ENCODE measurements at regions of chr19 and their contacts with region 1.

Region 1: GRCh38 chr19:9785367-9786331 is 17.1 kb upstream of the ZNF846 start:
- DNase-seq: peak; percentile 99
- H3K4me3 ChIP-seq: peak overlapping the region; percentile 99
- H3K27ac ChIP-seq: peak overlapping the region; percentile 91
- H3K4me1 ChIP-seq: peaks cover 7% of the 10 kb centered on the region; the same call in 1 of the 2 replicates
- H3K27me3 ChIP-seq: no peaks in the 10 kb centered on the region

Region 2: GRCh38 chr19:9139609-9140158 is 646.0 kb before region 1 on chr19:
- in situ Hi-C with region 1: loop called (anchors 10 kb)
- DNase-seq: peak; percentile 13
- H3K4me3 ChIP-seq: peak overlapping the region; percentile 100
- H3K27ac ChIP-seq: no peak overlapping the region
- H3K4me1 ChIP-seq: peaks cover 8% of the 10 kb centered on the region
- H3K27me3 ChIP-seq: no peaks in the 10 kb centered on the region

Region 3: DNA sequence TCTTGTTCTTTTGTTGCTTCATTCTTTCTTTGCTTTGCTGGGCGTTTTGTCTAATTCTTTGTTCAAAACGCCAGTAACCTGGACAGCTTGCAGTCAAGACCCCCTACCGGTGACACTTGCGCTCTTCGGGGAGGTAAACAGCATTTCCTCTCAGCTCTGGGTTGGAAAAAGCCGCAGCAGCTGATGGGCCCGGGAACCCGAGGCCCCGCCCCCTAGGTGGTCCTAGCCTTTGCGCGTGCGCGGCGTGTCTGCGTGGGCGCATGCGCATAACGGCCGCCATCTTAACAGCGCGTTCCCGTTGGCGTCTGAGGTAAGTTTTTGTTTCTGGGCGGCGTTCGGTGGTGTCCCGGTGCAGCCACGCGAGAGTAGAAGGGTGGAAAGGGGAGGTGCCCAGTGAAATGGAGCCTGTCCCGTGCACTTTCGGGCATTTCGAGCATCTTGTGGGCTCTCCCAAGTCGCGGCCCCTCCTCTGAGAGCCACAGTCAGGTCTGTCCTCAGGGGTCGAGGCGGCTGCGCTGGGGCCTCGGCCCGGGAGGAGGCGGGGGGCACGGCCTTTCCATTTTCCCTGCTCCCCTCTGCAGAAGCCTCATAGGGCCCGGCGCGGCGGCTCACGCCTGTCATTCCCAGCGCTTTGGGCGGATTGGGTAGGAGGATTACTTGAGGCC is 461.6 kb before region 1 on chr19 and contains the start of gene ZNF559:
- in situ Hi-C with region 1: loop called (anchors 25 kb)
- DNase-seq: peak; percentile 99
- H3K4me3 ChIP-seq: peak within 1 kb of the TSS; percentile 94
- H3K27ac ChIP-seq: peak within 1 kb of the TSS; percentile 79
- H3K4me1 ChIP-seq: no peaks in the 10 kb centered on the region
- H3K27me3 ChIP-seq: no peaks in the 10 kb centered on the region
- total RNA-seq, gene ZNF559: 6.7 and 8.1 TPM in 2 replicates

Region 4: DNA sequence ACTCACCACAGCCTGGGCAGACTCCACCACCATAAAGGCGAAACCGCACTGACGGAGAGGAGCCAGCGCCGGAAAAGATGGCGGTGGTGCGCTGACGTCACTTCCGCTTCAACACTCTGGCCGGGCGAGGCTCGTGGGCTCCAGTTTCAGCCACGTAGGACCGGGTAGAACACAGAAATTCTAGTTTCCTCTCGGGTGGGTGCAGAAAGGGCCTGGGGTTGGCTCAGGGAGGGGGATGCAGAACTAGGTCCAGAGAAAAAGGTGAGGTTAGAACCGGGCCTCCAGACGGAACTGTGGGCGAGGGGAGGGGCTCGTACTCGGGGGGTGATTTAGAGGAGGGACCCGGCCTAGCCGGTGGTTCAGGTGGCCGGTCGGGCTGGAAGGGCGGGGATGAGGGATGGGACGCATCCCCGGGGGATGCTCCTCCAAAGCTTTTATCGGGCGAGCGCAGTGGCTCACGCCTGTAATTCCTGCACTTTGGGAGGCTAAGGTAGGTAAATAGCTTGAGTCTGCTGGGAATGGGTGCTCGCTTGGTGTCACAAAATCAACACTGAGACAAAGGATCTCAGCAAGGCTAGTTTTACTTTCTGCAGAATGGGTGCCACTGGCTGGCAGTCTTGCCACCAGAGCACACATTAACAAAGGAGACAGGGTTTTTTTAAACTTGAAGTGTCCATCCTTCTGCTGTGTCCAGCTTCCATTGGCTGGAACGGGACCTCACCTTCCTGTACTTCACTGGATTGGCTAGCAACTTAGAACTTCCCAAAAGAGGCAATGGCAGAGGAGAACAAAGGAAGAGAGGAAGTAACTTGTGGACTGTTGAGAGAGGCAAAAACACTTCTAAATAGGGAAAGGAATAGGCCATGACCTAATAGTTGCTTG is 164.3 kb before region 1 on chr19 and contains the start of gene ZNF561:
- in situ Hi-C with region 1: loop called (anchors 10 kb)
- DNase-seq: peak; percentile 96
- H3K4me3 ChIP-seq: peak within 1 kb of the TSS; percentile 98
- H3K27ac ChIP-seq: peak within 1 kb of the TSS; percentile 95
- H3K4me1 ChIP-seq: 0 out of 2 replicates have a peak, but pooled peaks cover 6% of the 10 kb centered on the region
- H3K27me3 ChIP-seq: no peaks in the 10 kb centered on the region
- total RNA-seq, gene ZNF561: 24.8 and 33.6 TPM in 2 replicates

Region 5: DNA sequence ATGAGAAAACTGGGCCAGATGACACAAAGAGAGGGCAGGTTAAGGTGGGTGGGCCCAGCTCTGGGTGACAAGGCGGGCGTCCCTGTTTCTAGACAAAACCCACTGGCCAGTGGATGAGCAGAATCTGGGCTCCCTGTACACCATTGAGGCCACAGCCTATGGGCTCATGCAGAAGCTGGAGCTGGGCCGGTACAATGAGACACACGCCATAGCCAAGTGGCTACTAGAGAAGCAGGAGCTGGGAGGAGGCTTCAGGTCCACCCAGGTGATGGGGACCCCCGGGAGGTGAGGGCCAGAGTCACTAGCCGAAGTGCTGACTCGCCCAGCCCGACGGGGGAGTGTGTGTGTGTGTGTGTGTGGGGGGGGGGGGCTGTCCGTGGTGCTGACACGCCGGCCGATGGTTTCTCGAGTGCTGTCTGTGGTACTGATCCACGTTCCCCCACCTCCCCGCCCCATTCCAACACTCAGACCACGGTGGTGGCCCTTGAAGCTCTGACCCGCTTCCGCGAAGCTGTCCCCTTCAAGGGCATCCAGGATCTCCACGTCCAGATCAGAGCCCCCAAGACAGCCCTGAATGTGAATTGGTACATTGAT is 276.2 kb after region 1 on chr19:
- in situ Hi-C with region 1: no loop called
- DNase-seq: peak; percentile 39
- H3K4me3 ChIP-seq: no peak overlapping the region
- H3K27ac ChIP-seq: no peak overlapping the region
- H3K4me1 ChIP-seq: no peaks in the 10 kb centered on the region
- H3K27me3 ChIP-seq: peaks cover 6% of the 10 kb centered on the region; the same call in 1 of the 2 replicates

Measured in GM23248 (cell line).